Panc1 (cell line): ENCODE measurements at regions of chr13 and their contacts with region 1.

Region 1: DNA sequence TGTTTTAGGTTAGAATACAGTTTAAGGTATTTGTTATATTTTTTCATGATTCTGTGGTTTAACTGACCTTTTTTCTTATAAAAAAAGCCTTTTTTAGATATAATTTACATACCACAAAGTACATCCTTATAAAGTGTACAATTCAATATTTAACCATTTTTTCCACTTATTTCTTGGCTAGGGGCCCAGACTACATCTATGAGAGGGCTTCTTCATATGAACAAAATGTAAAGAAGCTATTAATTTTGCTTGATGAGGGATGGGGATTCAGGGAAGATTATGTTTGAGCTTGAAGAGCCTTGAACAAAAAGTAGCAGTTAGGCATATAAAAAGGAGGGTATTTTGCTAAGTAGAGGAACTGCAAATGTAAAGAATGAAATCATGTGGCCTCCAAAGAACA is 2.2 kb downstream of the CCDC122 start:
- DNase-seq: no peak
- ATAC-seq: no peak
- H3K4me3 ChIP-seq: no peak overlapping the region
- H3K27ac ChIP-seq: no peak overlapping the region
- H3K4me1 ChIP-seq: no peaks in the 10 kb centered on the region; the same call in 1 of the 2 replicates
- H3K27me3 ChIP-seq: no peaks in the 10 kb centered on the region
- CTCF ChIP-seq: no peak

Region 2: GRCh38 chr13:43285933-43286597 is 591.3 kb before region 1 on chr13:
- CTCF ChIA-PET with region 1: no interaction called
- POLR2A ChIA-PET with region 1: no interaction called
- in situ Hi-C with region 1: no loop called
- intact Hi-C with region 1: no loop called
- DNase-seq: no peak
- ATAC-seq: no peak
- H3K4me3 ChIP-seq: no peak overlapping the region
- H3K27ac ChIP-seq: no peak overlapping the region
- H3K4me1 ChIP-seq: no peaks in the 10 kb centered on the region; the same call in 1 of the 2 replicates
- H3K27me3 ChIP-seq: no peaks in the 10 kb centered on the region
- CTCF ChIP-seq: no peak

Region 3: DNA sequence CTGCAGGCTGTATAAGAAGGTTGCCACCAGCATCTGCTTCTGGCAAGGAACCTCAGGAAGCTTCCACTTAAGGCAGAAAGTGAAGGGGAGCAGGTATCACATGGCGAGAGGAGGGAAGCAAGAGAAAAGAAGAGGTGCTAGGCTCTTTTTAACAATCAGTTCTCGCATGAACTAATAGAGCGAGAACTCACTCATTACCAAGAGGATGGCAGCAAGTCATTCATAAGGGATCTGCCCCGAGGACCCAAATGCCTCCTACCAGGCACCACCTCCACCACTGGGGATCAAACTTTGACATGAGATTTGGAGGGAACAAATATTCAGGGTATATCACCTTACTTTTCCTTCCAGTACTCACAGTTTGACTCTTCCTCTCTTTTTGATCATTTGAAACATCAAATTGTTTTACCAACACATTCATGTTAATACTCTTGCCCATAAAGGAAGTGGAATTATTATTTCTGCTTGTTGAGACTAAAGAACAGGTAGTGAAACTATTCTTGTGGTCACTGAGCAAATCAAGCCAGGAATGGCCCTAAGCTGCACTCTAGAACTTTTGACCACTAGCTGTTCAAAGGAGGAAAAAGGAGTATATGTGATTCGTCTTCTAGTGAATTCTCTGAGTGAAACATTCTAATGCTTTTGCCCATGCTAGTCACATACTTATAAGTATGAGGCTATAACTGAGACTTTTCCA is 47.4 kb after region 1 on chr13:
- CTCF ChIA-PET with region 1: interaction called, 4 read pairs
- POLR2A ChIA-PET with region 1: interaction called, 11 read pairs
- in situ Hi-C with region 1: no loop called
- intact Hi-C with region 1: no loop called
- DNase-seq: no peak
- ATAC-seq: no peak
- H3K4me3 ChIP-seq: no peak overlapping the region
- H3K27ac ChIP-seq: no peak overlapping the region
- H3K4me1 ChIP-seq: no peaks in the 10 kb centered on the region
- H3K27me3 ChIP-seq: peaks cover 4% of the 10 kb centered on the region
- CTCF ChIP-seq: no peak

Region 4: DNA sequence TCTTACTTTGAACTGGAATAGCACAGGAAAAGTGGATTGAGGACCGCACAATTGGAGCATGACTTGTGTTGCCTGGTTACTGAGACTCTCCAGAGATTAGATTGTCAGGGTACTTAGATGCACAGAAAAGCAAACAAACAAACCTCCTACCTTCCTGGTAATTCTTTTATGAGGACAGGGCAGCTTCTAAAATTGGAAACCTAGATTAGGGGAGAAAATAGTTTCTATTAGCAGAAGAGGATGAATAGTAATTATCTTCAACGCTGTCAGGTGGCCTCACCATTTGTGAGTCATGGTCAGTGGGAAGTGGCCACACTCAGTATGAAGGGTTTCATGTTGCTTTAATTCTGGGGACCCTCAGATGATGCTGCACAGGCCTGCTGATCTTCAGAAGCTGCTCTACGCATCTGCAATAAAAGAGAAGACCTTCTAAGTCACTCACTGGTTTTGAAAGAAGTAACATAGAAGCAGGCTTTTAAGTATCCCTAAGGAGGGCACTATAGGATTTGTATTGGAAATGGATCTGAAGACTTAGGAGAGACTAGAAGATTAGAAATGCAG is 109.2 kb after region 1 on chr13:
- CTCF ChIA-PET with region 1: no interaction called
- POLR2A ChIA-PET with region 1: no interaction called
- in situ Hi-C with region 1: no loop called
- intact Hi-C with region 1: no loop called
- DNase-seq: no peak
- ATAC-seq: no peak
- H3K4me3 ChIP-seq: no peak overlapping the region
- H3K27ac ChIP-seq: no peak overlapping the region
- H3K4me1 ChIP-seq: no peaks in the 10 kb centered on the region
- H3K27me3 ChIP-seq: no peaks in the 10 kb centered on the region
- CTCF ChIP-seq: no peak